Posterior vena cava (tissue), 2 donors: ENCODE measurements at regions of chr14 and their contacts with region 1.

Region 1: DNA sequence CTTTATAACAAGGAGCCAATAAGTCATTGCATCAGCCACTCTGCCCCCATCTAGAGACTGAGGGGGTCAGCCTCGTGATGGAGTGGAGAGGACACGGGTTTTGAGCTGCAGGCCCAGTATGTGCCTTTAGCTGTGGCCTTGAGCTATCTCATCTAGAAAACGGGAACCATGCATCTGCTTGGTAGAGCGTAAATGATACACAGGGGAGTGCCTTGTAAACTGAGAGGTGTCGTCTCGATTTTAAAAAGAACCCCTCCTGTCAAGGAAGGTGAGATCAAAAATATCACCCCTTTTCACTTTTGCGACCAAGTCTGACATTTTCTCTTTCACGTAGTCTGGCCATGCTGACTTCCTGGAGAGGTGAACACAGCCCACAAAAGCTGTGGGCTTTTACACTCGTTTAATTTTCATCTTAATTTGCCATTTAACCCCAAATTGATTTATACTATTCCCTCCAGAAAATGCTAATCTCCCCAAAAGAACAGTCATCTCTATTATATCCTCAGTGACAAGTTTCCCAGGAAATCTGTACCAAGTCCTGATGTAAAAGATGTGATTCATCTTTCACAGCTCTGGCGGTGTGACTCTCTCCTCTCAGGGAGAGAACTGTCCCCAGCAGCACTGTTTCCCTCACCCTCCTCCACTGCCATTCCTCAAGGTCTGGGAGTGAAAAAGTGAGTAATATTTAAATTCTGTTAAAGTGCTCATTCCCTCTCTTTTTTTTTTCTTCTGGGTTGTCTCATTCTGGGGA is 30.6 kb downstream of the VCPKMT start:
- DNase-seq: no peak

Region 2: DNA sequence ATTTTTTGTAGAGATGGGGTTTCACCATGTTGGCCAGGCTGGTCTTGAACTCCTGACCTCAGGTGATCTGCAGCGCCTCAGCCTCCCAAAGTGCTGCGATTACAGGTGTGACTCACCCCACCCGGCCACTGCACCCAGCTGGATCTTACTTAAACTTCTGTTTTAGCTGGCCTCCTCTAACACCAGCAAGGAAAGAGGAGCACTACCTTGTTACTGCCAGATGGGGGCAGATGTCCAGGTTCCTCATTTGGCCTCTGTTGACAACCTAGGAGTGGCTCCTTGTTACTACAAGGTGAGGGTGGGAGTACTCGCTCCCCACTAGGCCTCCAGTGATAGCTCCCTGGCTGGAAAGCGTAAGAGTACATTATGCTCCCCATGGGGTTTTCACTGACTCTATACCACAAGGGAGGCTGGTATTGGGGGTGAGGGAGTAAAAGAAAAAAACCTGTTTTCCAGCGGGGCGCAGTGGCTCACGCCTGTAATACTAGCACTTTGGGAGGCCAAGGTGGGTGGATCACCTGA is 206.0 kb before region 1 on chr14:
- intact Hi-C with region 1: loop called in 1 of 2 experiments (anchors 10 kb)
- DNase-seq: no peak